ENCODE measurements at regions of chr22 and their contacts with region 1.

Region 1: DNA sequence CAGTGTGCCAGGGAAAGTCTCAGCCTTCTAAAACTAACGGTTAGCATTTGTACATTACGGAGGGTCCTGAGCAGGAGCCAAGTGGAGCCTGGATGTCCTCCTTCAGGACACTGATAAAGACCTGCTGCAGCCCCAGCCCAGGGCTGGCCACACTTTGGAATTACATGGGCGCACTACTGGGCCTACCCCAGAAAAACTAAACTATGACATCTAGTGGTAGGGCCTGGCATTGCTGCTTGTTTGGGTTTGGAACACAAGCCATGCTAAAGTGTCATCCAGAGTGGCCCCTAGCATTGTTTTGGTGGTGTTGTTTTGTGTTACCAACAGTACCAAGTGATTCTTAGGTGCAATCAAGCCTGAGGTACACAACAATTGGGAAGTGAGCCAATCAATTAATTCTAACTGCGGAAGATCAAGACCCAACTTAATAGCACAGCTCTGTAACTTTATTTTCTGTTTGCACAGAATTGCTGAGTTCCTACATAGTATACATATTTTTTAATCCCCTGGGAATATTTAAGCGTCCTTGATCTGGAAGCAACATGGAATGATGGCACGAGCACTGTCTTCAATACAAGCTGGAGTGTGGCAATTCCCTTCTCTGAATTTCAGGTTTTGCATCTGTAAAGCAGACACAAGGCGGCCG is 340.7 kb downstream of the LARGE1 start:
- DNase-seq: peak; percentile 56
- H3K4me3 Mint-ChIP-seq: no peak overlapping the region
- H3K27ac Mint-ChIP-seq: no peak overlapping the region
- H3K4me1 Mint-ChIP-seq: no peaks in the 10 kb centered on the region
- H3K27me3 Mint-ChIP-seq: no peaks in the 10 kb centered on the region

Region 2: GRCh38 chr22:33519071-33519973 is 60.2 kb before region 1 on chr22:
- CTCF ChIA-PET with region 1: interaction called, 5 read pairs
- intact Hi-C with region 1: loop called (anchors 1 kb)
- DNase-seq: peak; percentile 11
- H3K4me3 Mint-ChIP-seq: no peak overlapping the region
- H3K27ac Mint-ChIP-seq: no peak overlapping the region
- H3K4me1 Mint-ChIP-seq: no peaks in the 10 kb centered on the region
- H3K27me3 Mint-ChIP-seq: peaks cover 5% of the 10 kb centered on the region

Region 3: DNA sequence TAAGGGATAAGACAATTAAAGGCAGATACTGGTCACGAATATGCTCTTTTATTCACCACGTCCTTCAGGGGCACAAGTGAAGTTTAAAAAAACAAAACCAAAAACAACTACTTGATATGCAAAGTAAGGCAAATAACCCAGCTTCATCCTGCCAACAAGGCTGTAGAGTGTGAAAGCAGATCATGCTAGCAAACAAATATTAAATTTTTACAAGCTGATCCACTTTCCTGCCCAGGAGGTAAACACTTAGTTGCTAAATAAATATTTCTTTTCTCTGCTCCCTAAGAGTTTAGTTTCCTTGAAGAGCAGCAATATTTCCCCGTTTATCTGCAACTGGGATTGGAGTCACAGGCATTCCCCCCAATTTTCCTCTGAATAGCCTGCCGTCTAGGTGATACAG is 40.5 kb after region 1 on chr22:
- CTCF ChIA-PET with region 1: no interaction called
- intact Hi-C with region 1: no loop called
- DNase-seq: no peak
- H3K4me3 Mint-ChIP-seq: no peak overlapping the region
- H3K27ac Mint-ChIP-seq: no peak overlapping the region
- H3K4me1 Mint-ChIP-seq: no peaks in the 10 kb centered on the region
- H3K27me3 Mint-ChIP-seq: no peaks in the 10 kb centered on the region

Region 4: DNA sequence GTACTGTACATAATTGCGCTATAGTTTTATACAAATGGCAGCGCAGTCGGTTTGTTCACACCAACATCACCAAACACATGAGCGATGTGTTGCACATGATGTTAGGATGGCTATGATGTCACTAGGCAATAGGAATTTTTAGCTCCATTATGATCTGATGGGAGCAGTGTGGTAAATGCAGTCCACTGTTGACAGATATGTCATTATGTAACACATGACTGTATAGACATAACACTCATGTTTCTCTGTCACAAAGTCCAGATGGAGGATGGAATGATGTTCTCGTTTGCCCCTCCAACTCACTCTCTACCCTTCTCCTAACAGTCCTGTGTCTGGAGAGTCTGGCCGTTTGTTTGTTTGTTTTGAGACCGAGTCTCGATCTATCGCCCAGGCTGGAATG is 52.2 kb after region 1 on chr22:
- CTCF ChIA-PET with region 1: no interaction called
- intact Hi-C with region 1: no loop called
- DNase-seq: no peak
- H3K4me3 Mint-ChIP-seq: no peak overlapping the region
- H3K27ac Mint-ChIP-seq: no peak overlapping the region
- H3K4me1 Mint-ChIP-seq: no peaks in the 10 kb centered on the region
- H3K27me3 Mint-ChIP-seq: no peaks in the 10 kb centered on the region